ENCODE measurements at regions of chr11 and their contacts with region 1.

Region 1: DNA sequence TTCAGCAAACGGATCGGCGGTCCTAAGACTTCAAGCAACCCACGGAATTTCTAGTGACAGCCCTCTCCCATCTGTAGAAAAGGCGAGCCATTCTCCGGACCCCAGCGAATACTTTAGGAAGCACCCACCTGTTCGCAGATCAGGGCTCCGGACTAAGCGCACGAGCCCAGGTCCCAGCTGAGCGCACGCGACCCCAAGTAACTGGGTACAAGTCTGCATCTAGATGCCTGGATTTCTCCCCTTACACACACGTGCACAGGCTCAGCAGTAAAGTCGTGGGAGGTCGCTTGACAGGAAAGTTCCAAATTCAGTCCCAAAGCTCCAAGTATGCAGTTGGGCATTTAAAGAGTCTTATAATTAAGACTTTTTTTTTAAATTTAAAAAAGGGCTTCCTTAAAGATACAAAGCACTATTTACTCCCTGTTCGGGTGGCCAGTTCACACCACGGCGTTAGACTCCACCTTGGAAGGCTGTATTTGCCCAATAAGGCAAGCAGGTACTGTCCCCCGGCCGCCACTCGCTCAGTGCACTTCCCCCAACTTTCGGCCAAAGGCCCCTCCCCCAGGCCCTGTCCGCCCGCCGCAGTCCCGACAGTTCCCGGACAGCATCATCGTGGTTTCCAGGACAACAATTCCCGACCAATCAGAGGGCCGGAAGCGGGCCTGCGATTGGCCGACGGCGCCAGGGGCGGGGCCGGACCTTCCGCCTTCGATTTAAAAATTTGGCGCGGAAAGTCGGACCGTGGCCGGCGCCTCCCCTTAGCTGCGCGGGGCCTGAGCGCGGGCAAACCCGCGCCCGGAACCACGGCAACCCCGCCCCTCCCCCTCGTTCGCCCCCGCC is at the start of gene E2F8:
- DNase-seq: peak; percentile 89
- ATAC-seq: peak; percentile 97
- H3K4me3 ChIP-seq: peak within 1 kb of the TSS; percentile 78
- H3K27ac ChIP-seq: no peak within 1 kb of the TSS; the same call in 1 of the 2 replicates
- H3K4me1 ChIP-seq: no peaks in the 10 kb centered on the region
- H3K27me3 ChIP-seq: peaks cover 26% of the 10 kb centered on the region
- CTCF ChIP-seq: no peak
- POLR2A ChIP-seq: no peak
- RAD21 ChIP-seq: no peak
- total RNA-seq, gene E2F8: 1.1 TPM in 2 replicates

Region 2: DNA sequence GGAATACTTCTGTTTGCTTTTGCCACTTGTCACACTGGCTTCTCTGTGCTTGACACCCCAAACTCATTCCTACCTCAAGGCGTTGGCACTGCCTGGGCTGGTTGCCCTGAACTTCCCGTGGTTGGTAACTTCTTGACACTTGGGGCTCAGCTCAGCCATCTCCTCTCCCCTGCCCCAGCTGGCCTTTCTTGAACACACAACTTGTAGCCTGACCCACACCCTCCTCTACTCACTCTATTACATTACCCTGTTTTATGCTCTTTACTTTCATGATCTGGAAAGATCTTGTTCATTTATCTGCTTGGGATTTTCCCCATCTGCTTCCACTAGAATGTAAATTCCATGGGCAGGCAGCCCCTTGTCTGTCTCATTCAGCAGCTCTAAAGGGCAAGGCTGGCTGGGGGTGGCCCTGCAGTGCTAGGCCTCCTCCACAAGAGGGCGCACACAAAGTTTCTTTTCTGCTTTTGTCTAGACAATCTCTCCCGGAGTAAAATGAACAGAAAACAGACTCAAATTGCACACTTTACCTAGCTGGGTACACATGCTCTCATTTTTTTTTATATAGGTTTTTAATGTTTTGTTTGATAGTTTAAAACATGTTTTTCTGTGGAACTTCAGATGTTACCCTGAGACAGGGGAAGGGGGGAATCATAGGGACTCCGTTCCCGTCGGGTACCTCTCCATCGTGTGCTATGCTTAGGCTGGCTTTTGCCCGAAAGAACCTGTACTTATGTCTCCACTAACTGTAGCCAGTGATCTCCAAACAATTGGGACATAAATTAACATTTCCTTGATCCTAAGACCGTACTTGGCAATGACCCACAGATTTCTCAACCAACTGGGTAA is 163.7 kb before region 1 on chr11:
- CTCF ChIA-PET with region 1: no interaction called
- POLR2A ChIA-PET with region 1: no interaction called
- dilution Hi-C with region 1: no loop called
- in situ Hi-C with region 1: no loop called
- intact Hi-C with region 1: loop called (anchors 5 kb)
- DNase-seq: peak; percentile 19
- ATAC-seq: peak; percentile 92
- H3K4me3 ChIP-seq: no peak overlapping the region
- H3K27ac ChIP-seq: no peak overlapping the region
- H3K4me1 ChIP-seq: peaks cover 3% of the 10 kb centered on the region; the same call in 1 of the 2 replicates
- H3K27me3 ChIP-seq: peaks cover 16% of the 10 kb centered on the region
- CTCF ChIP-seq: peak; percentile 79
- POLR2A ChIP-seq: no peak
- RAD21 ChIP-seq: peak; percentile 48

Measured in IMR-90 (cell line).